ENCODE measurements at regions of chr5 and their contacts with region 1.

Region 1: GRCh38 chr5:34898258-34898895 is 16.9 kb downstream of the RAD1 start:
- DNase-seq: peak; percentile 73
- H3K4me3 Mint-ChIP-seq: no peak overlapping the region
- H3K27ac Mint-ChIP-seq: no peak overlapping the region
- H3K4me1 Mint-ChIP-seq: peaks cover 10% of the 10 kb centered on the region
- H3K27me3 Mint-ChIP-seq: no peaks in the 10 kb centered on the region
- CTCF ChIP-seq: peak; percentile 80

Region 2: GRCh38 chr5:34486160-34486848 is 412.1 kb before region 1 on chr5:
- CTCF ChIA-PET with region 1: interaction called, 468 read pairs
- POLR2A ChIA-PET with region 1: interaction called, 16 read pairs
- intact Hi-C with region 1: loop called (anchors 1 kb)
- DNase-seq: peak; percentile 91
- H3K4me3 Mint-ChIP-seq: no peak overlapping the region
- H3K27ac Mint-ChIP-seq: no peak overlapping the region
- H3K4me1 Mint-ChIP-seq: peaks cover 29% of the 10 kb centered on the region
- H3K27me3 Mint-ChIP-seq: peaks cover 4% of the 10 kb centered on the region
- CTCF ChIP-seq: peak; percentile 74

Region 3: GRCh38 chr5:34517249-34517648 is 381.1 kb before region 1 on chr5:
- CTCF ChIA-PET with region 1: interaction called, 126 read pairs
- POLR2A ChIA-PET with region 1: interaction called, 3 read pairs
- intact Hi-C with region 1: no loop called
- DNase-seq: peak; percentile 51
- H3K4me3 Mint-ChIP-seq: no peak overlapping the region
- H3K27ac Mint-ChIP-seq: no peak overlapping the region
- H3K4me1 Mint-ChIP-seq: peaks cover 7% of the 10 kb centered on the region
- H3K27me3 Mint-ChIP-seq: no peaks in the 10 kb centered on the region
- CTCF ChIP-seq: no peak

Region 4: DNA sequence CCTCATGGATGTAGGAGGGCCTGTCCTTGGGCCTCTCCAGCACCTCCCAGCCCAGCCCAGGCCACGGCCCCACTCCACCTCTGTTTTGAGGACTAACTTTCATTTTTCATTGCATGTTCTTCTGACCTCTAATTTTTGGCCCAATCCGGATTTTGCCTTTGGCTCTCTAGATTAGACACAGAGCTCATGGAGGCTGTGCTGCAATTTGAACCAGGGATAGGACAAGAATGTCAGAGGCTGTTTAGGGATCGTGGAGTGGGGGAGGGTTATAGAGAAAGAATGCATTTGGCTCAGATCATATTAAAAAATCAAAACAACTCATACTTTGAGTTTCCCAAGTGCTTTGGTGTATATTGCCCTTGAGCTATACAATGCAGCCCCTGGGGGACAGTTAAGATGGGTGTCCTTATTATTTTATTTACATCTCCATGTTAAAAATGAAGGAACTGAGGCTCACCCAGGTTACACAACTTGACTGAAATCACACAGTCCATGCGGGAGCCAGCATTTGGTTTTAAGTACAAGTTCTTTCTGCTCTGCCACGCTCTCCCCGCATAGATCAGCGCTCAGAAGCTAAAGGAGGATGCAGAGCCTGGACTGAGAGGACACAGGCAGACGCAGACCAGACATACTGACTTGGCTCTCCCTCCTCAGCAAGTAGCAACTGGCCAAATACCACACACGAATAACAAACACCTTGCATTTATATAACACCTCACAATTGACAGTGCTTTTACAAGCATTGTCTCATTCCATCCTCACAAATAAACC is 368.7 kb before region 1 on chr5:
- CTCF ChIA-PET with region 1: interaction called, 126 read pairs
- POLR2A ChIA-PET with region 1: interaction called, 7 read pairs
- intact Hi-C with region 1: no loop called
- DNase-seq: no peak
- H3K4me3 Mint-ChIP-seq: no peak overlapping the region
- H3K27ac Mint-ChIP-seq: no peak overlapping the region
- H3K4me1 Mint-ChIP-seq: peaks cover 23% of the 10 kb centered on the region
- H3K27me3 Mint-ChIP-seq: no peaks in the 10 kb centered on the region
- CTCF ChIP-seq: no peak

Region 5: DNA sequence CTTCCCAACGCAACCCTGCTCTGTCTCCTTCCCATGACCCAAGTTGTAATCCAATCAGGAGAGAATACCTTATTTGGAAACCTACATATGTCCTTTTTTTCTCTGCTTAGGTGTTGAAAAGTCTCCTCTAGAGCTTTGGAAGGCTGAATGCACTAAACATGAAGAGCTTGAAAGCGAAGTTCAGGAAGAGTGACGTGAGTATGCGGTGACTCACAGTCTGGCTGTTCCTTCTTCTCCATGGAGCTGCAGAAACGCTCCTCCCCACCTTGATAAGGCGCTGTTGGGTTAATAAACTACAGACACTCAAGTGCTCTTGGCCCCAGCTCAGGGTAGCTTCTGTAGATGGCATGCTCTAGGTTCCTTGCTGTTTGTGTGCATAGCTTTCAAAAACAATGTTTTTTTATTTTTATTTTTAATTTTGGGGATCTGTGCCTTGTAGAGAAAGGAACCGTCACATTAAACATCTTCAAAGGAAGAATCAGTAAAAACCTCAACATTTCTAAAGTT is 211.6 kb before region 1 on chr5:
- CTCF ChIA-PET with region 1: interaction called, 29 read pairs
- POLR2A ChIA-PET with region 1: interaction called, 3 read pairs
- intact Hi-C with region 1: no loop called
- DNase-seq: peak; percentile 93
- H3K4me3 Mint-ChIP-seq: peak overlapping the region; percentile 10
- H3K27ac Mint-ChIP-seq: peak overlapping the region; percentile 55
- H3K4me1 Mint-ChIP-seq: peaks cover 16% of the 10 kb centered on the region
- H3K27me3 Mint-ChIP-seq: no peaks in the 10 kb centered on the region
- CTCF ChIP-seq: no peak

Region 6: DNA sequence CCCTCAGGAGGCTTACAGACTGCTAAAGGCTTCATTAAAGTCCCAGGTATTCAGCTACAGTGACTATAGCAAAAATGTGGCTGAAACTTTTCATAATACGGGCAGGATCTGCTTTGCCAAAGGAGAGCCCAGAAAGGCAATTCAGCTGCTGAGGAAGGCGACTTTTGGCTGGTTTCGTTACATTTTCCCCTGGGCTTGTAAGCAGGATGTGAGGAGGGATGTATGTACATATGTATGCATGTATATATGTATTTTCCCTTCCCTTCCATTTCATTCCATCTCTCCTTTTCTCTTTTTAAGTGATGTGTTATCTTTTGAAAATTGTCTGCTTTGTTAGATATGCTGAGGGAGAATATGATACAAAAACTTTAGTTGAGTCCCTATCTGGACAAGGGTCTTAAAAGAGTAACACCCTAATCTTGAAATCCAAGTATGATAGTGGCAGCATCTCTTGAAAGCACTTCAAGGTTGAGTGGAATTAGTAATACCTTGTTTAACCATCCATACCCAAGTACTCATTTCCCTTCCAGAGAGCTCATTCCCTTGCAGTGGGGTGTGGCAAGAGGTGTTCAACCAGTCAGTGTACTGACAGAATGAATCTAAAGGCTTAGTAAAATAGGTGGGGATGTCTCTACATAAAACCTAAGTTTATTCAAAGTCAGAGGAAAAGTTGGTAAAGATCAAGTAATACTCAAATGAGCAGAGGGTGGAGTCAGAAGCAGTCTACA is 11.8 kb before region 1 on chr5:
- CTCF ChIA-PET with region 1: interaction called, 10 read pairs
- POLR2A ChIA-PET with region 1: interaction called, 3 read pairs
- intact Hi-C with region 1: no loop called
- DNase-seq: no peak
- H3K4me3 Mint-ChIP-seq: no peak overlapping the region
- H3K27ac Mint-ChIP-seq: no peak overlapping the region
- H3K4me1 Mint-ChIP-seq: no peaks in the 10 kb centered on the region
- H3K27me3 Mint-ChIP-seq: no peaks in the 10 kb centered on the region
- CTCF ChIP-seq: no peak

Region 7: DNA sequence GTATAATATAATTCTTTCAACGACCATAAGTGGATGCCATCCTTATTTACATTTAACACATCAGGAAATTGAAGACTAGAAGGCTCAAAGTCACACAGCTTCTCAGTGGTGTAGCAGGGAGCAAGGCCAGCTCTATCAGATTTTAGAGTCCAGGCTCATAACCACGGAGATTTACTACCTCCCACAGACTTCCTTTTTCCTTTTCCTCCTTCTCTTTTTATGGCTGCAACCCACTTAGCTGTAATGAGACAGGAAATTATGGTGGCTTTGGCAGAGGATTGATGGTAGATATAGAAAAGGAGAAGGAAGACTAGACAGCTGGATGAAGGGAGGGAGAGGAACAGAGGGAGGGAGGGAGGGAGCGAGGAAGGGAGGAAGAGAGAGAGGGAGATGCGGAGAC is 766.7 kb after region 1 on chr5:
- CTCF ChIA-PET with region 1: no interaction called
- POLR2A ChIA-PET with region 1: no interaction called
- intact Hi-C with region 1: no loop called
- DNase-seq: no peak
- H3K4me3 Mint-ChIP-seq: no peak overlapping the region
- H3K27ac Mint-ChIP-seq: no peak overlapping the region
- H3K4me1 Mint-ChIP-seq: no peaks in the 10 kb centered on the region
- H3K27me3 Mint-ChIP-seq: no peaks in the 10 kb centered on the region
- CTCF ChIP-seq: no peak

Measured in MCF 10A (cell line).